ENCODE measurements at regions of chr2 and their contacts with region 1.

Region 1: DNA sequence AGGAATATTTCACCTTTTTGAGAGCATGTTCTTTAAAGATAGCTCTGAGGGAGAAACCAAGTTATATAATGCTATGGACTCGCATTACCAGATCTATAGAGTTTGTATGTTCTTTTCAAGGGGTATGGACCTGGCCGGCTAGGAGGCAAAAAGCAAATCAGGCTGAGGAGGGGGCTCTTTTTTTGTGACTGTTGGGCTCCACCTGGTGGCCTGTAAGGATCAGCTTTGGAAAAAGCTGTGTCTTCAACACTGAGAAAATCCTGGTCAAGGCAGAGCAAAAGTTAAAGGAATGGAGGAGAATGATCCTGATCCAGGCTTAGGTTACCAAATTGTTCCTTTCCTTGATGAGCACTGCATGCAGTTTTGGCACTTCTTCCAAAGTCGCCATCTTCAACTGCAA is 180.5 kb downstream of the DIS3L2 start:
- DNase-seq: no peak
- ATAC-seq: peak; percentile 68

Region 2: DNA sequence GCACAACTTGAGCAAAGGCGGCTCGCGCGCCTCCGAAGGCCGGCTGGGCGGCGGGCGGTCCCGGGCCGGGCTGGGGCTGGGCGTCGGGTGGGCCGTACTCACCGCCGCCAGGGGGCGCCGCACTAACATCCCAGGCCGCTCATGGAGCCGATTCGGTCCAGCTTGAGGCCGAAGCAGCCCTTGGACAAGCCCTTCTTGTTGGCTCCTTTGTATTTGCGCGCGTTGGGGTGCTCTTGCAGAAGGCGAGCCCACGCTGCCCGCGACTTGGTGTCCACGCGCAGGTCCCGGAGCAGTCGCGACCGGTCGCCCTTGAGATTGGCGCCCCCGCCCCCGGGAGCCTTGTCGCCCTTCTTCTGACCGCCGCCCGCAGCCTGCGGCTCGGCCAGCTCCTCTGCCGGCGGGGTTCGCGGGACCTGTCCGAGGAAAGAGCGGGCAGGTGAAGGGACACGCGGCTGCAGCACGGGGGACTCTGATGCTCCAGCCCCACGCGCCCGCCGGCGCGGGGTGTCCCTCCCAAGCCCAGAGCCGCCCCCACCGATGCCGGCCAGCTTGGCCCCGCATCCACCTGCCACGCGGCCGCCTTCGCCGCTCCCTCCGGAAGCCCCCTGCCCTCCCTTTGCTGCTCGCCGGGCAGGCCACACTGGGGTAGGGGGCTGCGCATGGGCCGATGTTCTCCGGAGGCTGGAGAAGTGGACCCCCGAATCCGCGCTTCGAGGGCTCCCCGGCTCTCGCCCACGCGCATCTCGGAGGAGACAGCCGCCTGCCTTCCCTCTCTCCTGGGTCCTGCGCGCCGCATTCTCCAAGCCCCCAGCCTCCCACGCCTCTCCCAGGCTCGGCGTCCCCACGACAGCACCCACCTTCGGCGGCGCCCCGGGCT is 216.5 kb before region 1 on chr2:
- intact Hi-C with region 1: loop called (anchors 10 kb)
- DNase-seq: peak; percentile 93
- ATAC-seq: peak; percentile 87

Region 3: DNA sequence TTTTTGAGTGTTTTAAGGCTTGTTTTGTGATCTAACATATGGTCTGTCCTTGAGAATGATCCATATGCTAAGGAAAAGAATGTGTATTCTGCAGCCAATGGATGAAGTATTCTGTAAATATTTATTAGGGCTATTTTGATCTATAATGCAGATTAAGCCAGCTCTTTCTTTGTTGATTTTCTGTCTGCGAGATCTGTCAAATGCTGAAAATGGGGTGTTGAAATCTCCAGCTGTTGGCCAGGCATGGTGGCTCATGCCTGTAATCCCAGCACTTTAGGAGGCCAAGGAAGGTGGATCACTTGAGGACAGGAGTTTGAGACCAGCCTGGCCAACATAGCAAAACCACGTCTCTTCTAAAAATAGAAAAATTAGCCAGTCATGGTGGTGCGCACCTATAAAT is 47.8 kb before region 1 on chr2:
- intact Hi-C with region 1: loop called (anchors 2 kb)
- DNase-seq: no peak
- ATAC-seq: no peak

Region 4: DNA sequence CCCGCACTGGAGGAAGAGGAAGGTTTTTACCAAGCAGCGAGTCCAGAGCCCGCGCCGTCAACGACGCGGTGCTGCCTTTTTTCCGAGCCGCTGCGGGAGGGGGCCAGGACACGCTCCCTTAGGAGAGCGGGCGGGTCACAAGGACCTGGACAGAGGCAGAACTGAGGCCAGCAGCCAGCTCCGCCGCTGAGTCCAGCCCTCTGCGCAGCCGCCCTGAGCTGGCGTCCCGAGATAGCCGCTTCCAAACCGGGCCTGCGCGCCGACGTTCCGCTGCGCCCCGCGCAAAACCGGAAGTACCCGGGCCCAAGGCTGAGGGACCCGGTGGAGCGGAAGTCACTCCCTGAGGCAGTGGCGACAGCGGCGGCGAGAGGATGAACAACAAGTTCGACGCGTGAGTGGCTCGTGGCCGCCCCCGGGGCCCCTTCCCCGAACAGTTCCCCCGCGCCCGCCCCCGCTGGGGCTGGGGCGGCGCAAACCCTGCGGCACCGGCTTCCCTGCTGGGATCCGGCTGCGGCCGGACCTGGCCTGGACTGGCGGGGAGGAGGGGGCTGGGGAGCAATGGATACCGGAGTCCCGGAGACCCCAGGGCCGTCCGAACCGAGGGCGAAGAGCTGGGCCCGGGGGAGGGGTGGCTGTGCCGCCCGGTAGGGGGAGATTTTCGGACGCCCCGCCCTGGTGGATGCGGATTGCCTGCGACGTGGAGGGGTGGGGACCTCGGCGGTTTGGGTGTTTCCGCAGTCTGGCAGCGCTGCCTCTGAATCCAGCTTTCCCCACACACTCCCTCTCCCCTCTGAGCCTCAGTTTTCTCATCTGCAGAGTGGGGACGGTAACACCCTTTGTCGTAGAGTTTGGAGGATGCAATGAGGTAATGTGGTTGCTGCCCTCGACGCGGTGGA is 408.6 kb after region 1 on chr2 and contains the starts of genes EIF4E2 and TIGD1:
- intact Hi-C with region 1: no loop called
- DNase-seq: peak; percentile 97
- ATAC-seq: peak; percentile 98
- total RNA-seq, gene EIF4E2: 40.7 TPM
- total RNA-seq, gene TIGD1: 1.7 TPM

Region 5: GRCh38 chr2:232689152-232689910 is 547.3 kb after region 1 on chr2:
- intact Hi-C with region 1: no loop called
- DNase-seq: peak; percentile 76
- ATAC-seq: peak; percentile 88